Ascending aorta (tissue), 2 donors: ENCODE measurements at regions of chr12 and their contacts with region 1.

Region 1: GRCh38 chr12:42482445-42483237 is 106.9 kb downstream of the PRICKLE1 start:
- DNase-seq: peak in 1 of 2 donors; percentile 79
- H3K4me3 ChIP-seq: peak overlapping the region; percentile 63 to 78
- H3K27ac ChIP-seq: peak overlapping the region; percentile 64 to 68
- H3K4me1 ChIP-seq: no peaks in the 10 kb centered on the region
- H3K27me3 ChIP-seq: no peaks in the 10 kb centered on the region
- CTCF ChIP-seq: peak; percentile 83 to 97 (median 88)

Region 2: GRCh38 chr12:42421844-42422779 is 60.5 kb before region 1 on chr12:
- intact Hi-C with region 1: loop called (anchors 1 kb)
- DNase-seq: no peak
- H3K4me3 ChIP-seq: peak overlapping the region; percentile 12 to 21
- H3K27ac ChIP-seq: peak overlapping the region; percentile 56 to 79
- H3K4me1 ChIP-seq: peaks cover 5 to 31% of the 10 kb centered on the region in 2 donors
- H3K27me3 ChIP-seq: no peaks in the 10 kb centered on the region
- CTCF ChIP-seq: no peak

Region 3: DNA sequence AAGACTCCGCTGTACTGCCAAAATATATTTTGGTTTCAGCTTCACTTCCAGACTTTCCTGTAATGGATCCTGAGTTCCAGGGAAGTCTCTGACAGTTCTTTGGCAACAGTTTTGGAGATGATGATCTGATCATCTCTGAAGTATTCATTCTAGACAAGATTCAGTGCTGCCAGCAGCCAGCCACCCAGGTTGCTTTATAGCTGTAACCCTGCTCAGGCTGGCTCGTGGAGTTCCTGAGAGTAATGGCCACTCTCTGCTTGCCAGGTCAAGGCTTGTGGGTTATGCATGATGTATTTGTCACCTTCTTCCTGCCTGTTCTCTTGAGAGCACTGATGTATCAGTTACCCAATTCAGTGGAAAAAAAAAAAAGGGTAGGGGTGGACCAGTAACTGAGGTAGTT is 32.4 kb before region 1 on chr12:
- intact Hi-C with region 1: no loop called
- DNase-seq: no peak
- H3K4me3 ChIP-seq: no peak overlapping the region
- H3K27ac ChIP-seq: no peak overlapping the region
- H3K4me1 ChIP-seq: peaks cover 2 to 3% of the 10 kb centered on the region in 2 donors
- H3K27me3 ChIP-seq: no peaks in the 10 kb centered on the region
- CTCF ChIP-seq: no peak

Region 4: DNA sequence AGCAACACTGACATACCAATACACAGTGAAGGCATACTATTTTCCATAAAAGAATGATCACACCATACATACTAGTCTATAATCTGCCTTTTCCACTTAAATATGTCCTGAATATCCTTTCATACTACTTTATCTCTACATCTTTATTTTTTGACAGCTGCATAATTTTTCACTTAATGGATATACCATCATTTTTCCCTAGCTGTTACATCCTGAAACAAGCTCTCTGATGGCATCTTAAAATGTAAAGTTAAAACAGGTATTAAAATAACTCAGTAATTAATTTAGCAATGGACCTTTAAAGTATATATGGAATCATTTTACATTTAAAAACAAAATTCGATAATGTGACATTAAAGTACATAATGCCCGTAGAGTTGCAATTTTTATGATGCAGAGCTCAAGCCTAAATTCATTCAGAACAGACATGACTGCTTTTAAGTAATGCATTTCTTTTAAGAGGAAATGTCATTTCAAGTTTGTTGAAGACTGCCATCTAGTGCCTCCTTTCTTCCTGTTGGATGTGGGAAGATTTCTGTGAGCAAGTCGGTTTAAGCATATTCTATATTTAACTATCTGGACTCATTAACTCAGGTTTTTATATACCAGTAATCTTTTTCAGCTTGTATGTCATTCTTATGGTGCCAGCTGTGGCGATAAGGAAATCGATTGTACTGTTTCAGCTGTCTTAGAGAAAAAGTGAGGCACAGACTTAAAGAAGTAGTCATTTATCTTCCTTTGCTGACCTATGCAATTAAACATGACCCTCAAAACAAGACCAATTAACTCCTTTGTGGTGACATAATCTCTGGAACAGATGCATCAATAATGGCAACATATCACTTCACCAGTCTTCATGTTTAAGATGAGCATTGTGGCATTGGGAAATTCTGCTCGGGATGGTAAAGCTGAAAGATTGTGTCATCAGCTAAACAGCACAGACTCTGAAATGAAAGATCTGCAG is 86.6 kb after region 1 on chr12:
- intact Hi-C with region 1: loop called (anchors 1 kb)
- DNase-seq: no peak
- H3K4me3 ChIP-seq: no peak overlapping the region
- H3K27ac ChIP-seq: no peak overlapping the region
- H3K4me1 ChIP-seq: peaks cover 0 to 5% of the 10 kb centered on the region in 2 donors
- H3K27me3 ChIP-seq: no peaks in the 10 kb centered on the region
- CTCF ChIP-seq: peak in 2 of 3 experiments; percentile 46 to 62

Region 5: GRCh38 chr12:42589465-42590329 is 107.1 kb after region 1 on chr12 and contains the start of gene PRICKLE1:
- intact Hi-C with region 1: loop called (anchors 2 kb)
- DNase-seq: peak in 1 of 2 donors; percentile 72
- H3K4me3 ChIP-seq: peak within 1 kb of the TSS; percentile 77 to 89
- H3K27ac ChIP-seq: peak within 1 kb of the TSS; percentile 23 to 55
- H3K4me1 ChIP-seq: peaks cover 5 to 13% of the 10 kb centered on the region in 2 donors
- H3K27me3 ChIP-seq: no peaks in the 10 kb centered on the region
- CTCF ChIP-seq: no peak
- total RNA-seq, gene PRICKLE1: 1.8 TPM

Region 6: DNA sequence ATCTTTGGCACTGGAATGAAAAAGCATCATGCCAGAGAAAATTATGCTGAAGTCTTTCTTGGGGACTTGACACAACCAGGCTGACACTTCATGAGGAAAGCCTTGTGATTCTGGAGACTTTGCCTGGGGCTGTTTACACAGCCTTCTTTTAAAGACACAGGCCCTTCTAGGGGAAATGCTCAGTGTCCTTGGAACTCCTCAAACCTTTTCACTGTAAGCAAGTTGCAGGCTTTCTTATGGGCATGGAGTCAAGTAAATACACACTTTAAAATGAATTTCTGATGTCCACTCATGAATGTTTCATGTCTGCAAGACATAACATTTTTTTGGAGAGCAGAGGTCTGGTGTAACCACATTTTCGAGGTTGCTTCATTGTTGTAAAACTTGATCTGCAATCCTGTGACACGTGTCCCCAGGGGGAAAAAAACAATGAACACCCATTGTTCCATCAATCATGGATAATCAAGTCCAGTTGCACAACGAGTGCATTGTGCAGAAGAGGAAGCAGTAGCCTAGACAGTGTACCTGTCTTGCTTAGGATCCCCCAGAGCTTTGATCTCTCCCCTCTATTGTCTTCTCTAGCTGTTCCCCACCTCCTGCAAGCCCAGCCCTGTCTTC is 262.0 kb after region 1 on chr12:
- intact Hi-C with region 1: loop called (anchors 10 kb)
- DNase-seq: no peak
- H3K4me3 ChIP-seq: no peak overlapping the region
- H3K27ac ChIP-seq: no peak overlapping the region
- H3K4me1 ChIP-seq: peaks cover 0 to 17% of the 10 kb centered on the region in 2 donors
- H3K27me3 ChIP-seq: no peaks in the 10 kb centered on the region
- CTCF ChIP-seq: no peak

Region 7: DNA sequence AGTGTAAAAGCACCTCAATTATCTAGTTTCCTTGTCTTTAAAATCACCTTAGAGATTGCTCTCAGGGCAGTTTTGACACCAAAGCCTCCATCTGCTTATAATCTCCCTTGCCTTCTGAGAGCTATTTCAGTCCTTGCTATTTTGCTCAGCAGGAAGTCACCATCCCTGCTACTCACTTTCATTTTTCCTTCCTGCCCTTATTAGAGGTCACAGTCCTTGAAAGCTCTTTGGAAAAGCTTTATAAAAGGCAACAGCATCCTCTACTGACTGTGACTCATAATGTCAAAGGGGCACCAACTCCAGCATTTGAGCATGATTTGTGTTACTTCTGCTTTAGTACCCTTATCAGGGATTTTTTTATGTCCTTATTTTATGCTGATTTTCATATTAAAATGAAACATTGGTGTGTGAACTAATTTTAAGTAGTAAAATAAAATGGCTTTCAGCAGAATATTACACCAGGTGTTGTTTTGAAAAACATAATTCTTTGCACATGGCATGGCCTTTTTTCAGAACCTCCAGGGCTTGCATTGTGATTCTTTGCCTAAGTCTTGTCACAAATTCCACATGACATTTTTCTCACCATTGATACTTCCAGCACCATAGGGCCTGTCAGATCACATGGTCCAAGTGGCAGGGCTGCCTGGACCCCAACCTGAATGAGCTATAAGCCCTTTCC is 856.3 kb after region 1 on chr12:
- intact Hi-C with region 1: loop called (anchors 2 kb)
- DNase-seq: no peak
- H3K4me3 ChIP-seq: no peak overlapping the region
- H3K27ac ChIP-seq: no peak overlapping the region
- H3K4me1 ChIP-seq: peaks cover 0 to 2% of the 10 kb centered on the region in 2 donors
- H3K27me3 ChIP-seq: no peaks in the 10 kb centered on the region
- CTCF ChIP-seq: peak in 2 of 3 experiments; percentile 29 to 44